ENCODE measurements at regions of chr17 and their contacts with region 1.

Region 1: GRCh38 chr17:29293890-29294579 is at the start of gene NUFIP2:
- DNase-seq: peak; percentile 98
- H3K4me3 ChIP-seq: peak within 1 kb of the TSS; percentile 82 to 95 (median 93)
- H3K27ac ChIP-seq: peak within 1 kb of the TSS; percentile 79
- H3K4me1 ChIP-seq: peaks cover 9% of the 10 kb centered on the region
- H3K27me3 ChIP-seq: no peaks in the 10 kb centered on the region
- CTCF ChIP-seq: no peak
- total RNA-seq, gene NUFIP2: 57.2 to 72.3 TPM

Region 2: GRCh38 chr17:29124117-29124924 is 169.7 kb before region 1 on chr17:
- CTCF ChIA-PET with region 1: interaction called, 14 read pairs
- dilution Hi-C with region 1: no loop called
- in situ Hi-C with region 1: no loop called
- intact Hi-C with region 1: loop called (anchors 1 kb)
- DNase-seq: peak; percentile 68
- H3K4me3 ChIP-seq: no peak overlapping the region
- H3K27ac ChIP-seq: no peak overlapping the region
- H3K4me1 ChIP-seq: peaks cover 3% of the 10 kb centered on the region
- H3K27me3 ChIP-seq: no peaks in the 10 kb centered on the region
- CTCF ChIP-seq: peak; percentile 70 to 78

Region 3: DNA sequence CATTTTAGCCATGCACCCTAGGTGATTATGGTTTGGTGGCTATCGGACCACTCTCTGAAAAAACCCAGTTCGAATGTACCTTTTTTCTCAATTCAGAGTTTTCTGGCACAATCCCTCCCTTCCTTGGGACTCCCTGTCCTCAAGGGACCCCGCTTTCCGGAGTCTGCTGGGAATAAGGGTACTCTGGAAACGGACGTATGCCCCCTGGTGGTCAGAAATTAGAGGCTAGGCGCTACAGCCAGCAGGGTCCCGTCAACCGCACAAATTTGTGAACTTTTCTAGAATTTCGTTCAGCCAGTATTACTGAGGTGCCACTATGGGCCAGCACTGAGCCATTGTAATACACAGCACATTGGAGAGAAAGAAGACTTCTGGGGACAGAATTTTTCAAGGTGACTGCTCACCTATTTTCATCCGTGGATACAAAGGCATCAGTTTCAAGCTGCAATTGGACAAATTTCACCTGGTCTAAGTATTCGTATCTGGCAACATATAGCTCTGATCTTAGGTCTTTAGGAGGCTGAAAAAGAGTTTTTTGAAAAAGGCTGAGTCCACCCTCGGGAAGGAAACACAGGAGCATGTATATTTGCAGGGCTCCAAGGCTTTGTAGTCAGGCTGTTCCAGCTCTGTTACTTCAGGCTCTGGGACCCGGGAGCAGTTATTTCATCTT is 74.5 kb before region 1 on chr17:
- CTCF ChIA-PET with region 1: no interaction called
- dilution Hi-C with region 1: no loop called
- in situ Hi-C with region 1: no loop called
- intact Hi-C with region 1: loop called (anchors 2 kb)
- DNase-seq: peak; percentile 54
- H3K4me3 ChIP-seq: no peak overlapping the region
- H3K27ac ChIP-seq: no peak overlapping the region
- H3K4me1 ChIP-seq: peaks cover 33% of the 10 kb centered on the region
- H3K27me3 ChIP-seq: no peaks in the 10 kb centered on the region
- CTCF ChIP-seq: peak; percentile 85 to 87

Region 4: DNA sequence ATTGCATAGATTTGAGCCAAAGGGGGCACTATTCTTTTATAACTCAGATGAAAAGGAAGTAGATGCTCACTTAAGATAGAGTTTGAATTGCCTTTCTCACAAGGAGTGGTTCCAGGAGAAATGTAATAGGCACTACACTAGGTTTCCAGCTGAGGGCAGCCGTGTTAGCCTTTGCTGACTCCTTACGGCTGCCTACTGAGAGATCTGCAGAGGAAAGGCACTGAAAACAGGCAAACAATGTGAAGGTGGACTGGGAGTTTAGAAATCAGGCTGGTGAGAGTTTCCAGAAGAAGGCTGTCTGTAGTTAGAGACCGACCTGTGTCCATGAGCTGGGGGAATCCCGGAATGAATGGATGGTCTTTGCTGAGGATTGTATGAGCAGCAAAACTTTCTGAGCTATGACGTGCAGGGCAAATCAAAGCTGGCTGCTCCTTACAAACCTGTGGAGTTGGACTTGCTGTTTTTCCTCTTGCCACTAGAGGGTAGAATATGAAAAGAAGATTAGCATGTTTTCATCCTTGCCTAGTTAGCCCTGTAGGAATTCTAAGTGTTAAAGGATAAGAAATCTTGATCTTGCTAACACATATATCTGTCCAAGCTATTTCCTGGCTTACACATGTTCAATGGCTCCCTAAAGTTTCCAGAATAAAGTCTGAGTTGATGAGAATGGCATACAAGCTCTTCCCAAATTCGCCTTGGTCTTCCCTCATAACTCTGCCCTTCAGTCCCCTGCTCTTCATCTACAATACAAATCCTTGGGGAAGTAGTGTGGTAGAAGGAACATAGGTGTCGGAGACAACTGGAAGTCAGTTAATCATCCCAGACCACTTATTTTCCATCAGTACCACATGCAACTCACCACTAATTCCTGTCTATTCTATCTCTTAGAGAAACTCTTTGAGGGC is 76.0 kb after region 1 on chr17:
- CTCF ChIA-PET with region 1: interaction called, 10 read pairs
- dilution Hi-C with region 1: no loop called
- in situ Hi-C with region 1: no loop called
- intact Hi-C with region 1: no loop called
- DNase-seq: peak; percentile 75
- H3K4me3 ChIP-seq: peak overlapping the region in 1 of 3 experiments; percentile 13
- H3K27ac ChIP-seq: peak overlapping the region; percentile 16
- H3K4me1 ChIP-seq: peaks cover 3% of the 10 kb centered on the region
- H3K27me3 ChIP-seq: no peaks in the 10 kb centered on the region
- CTCF ChIP-seq: peak; percentile 74 to 80

Region 5: GRCh38 chr17:29589524-29590410 is 295.7 kb after region 1 on chr17 and contains the start of gene GIT1:
- CTCF ChIA-PET with region 1: no interaction called
- dilution Hi-C with region 1: no loop called
- in situ Hi-C with region 1: no loop called
- intact Hi-C with region 1: loop called (anchors 2 kb)
- DNase-seq: peak; percentile 81
- H3K4me3 ChIP-seq: peak within 1 kb of the TSS; percentile 59 to 91 (median 75)
- H3K27ac ChIP-seq: peak within 1 kb of the TSS; percentile 39
- H3K4me1 ChIP-seq: peaks cover 74% of the 10 kb centered on the region
- H3K27me3 ChIP-seq: no peaks in the 10 kb centered on the region
- CTCF ChIP-seq: no peak
- total RNA-seq, gene GIT1: 41.8 to 83.4 TPM

Measured in mammary epithelial cell (primary cell).